ENCODE measurements at regions of chr22 and their contacts with region 1.

Region 1: GRCh38 chr22:29635734-29636357 is 32.4 kb downstream of the NF2 start:
- DNase-seq: peak; percentile 23
- ATAC-seq: peak; percentile 78
- H3K4me3 ChIP-seq: no peak overlapping the region
- H3K27ac ChIP-seq: no peak overlapping the region
- H3K4me1 ChIP-seq: peaks cover 11% of the 10 kb centered on the region
- H3K27me3 ChIP-seq: no peaks in the 10 kb centered on the region
- CTCF ChIP-seq: peak; percentile 62 to 79 (median 70)
- EP300 ChIP-seq: no peak
- POLR2A ChIP-seq: no peak
- RAD21 ChIP-seq: peak; percentile 72

Region 2: DNA sequence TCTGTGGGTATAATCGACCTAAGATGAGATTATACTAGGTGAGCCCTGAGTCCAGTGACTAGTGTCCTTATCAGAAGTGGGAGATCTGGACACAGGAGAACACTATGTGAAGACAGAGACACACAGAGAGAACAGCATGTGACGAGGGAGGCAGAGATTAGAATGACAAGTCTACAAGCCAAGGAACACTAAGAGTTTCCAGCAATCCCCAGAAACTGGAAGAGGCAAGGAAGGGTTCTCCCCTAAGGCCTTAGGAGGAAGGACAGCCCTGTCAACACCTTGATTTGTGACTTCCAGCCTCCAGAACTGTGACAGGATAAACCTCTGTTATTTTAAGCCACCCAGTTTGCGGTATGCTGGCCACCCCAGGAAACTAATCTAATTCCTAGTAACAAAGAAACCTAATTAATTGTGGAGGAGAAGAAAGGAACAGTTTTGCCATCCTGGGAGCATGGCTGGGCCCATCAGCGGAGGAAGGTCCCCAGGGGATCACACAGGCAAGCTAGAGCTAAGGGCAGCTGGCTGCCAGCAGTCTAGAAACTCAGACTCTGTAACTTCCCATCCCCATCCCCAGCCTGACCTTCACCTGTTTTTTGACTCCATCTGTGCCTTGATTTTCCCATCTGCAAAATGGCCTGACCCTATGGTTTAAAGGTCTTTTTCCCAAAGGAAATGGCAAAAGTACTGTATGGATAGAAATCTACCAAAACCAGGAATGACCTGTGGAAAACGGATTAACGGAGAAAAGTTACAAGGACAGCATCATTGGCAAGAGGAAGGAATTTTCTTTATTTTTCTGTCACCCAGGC is 72.0 kb before region 1 on chr22:
- CTCF ChIA-PET with region 1: no interaction called
- POLR2A ChIA-PET with region 1: no interaction called
- RAD21 ChIA-PET with region 1: no interaction called
- SMC1A ChIA-PET with region 1: no interaction called
- in situ Hi-C with region 1: no loop called
- intact Hi-C with region 1: no loop called
- DNase-seq: no peak
- ATAC-seq: no peak
- H3K4me3 ChIP-seq: no peak overlapping the region
- H3K27ac ChIP-seq: no peak overlapping the region
- H3K4me1 ChIP-seq: no peaks in the 10 kb centered on the region
- H3K27me3 ChIP-seq: no peaks in the 10 kb centered on the region
- CTCF ChIP-seq: no peak
- EP300 ChIP-seq: no peak
- POLR2A ChIP-seq: no peak
- RAD21 ChIP-seq: no peak

Region 3: GRCh38 chr22:29647954-29648737 is 12.3 kb after region 1 on chr22:
- CTCF ChIA-PET with region 1: interaction called, 6 read pairs
- POLR2A ChIA-PET with region 1: no interaction called
- RAD21 ChIA-PET with region 1: no interaction called
- SMC1A ChIA-PET with region 1: interaction called, 10 read pairs
- in situ Hi-C with region 1: no loop called
- intact Hi-C with region 1: no loop called
- DNase-seq: no peak
- ATAC-seq: no peak
- H3K4me3 ChIP-seq: no peak overlapping the region
- H3K27ac ChIP-seq: no peak overlapping the region
- H3K4me1 ChIP-seq: no peaks in the 10 kb centered on the region
- H3K27me3 ChIP-seq: no peaks in the 10 kb centered on the region
- CTCF ChIP-seq: no peak
- EP300 ChIP-seq: no peak
- POLR2A ChIP-seq: no peak
- RAD21 ChIP-seq: no peak

Region 4: DNA sequence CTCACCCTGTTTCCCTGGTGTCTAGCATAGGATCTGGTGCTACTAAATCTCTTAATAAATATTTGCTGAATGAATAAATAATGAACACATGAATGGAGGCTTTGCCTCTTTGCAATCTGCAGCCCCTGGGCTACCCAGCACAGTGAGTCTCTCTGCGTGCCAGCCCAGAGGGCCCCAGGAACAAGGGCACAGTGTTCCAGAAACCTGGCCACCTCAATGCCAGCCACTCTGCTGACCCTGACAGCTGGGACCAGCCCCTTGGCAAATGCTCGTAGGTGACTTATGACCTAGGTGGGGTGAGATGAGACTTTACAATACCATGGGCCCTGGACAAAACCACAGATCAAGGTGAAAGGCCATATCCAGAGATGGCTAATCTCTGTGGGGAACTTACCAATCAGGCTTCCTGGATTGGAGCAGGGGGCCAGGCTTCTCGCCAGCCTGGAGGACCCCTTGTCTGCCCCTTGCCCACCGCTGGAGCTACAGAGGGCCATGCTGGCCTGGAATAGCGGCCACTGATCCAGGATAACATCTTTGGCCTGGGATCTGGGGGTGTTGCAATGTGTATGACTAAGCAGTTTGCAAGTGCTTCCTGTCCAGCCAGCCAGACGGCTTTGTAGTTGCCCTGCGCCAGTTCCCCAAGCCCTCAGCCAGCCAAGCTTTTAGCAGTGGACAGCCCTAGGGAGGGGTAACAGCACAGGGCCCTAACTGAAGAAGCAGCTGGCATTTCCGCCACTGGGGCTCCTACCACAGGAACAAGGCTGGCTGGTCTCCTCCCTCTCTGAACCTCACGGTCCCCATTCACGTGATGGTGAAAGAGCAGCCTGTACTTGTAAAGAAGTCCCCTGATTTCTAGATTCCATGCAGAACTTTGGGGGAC is 163.2 kb after region 1 on chr22:
- CTCF ChIA-PET with region 1: no interaction called
- POLR2A ChIA-PET with region 1: no interaction called
- RAD21 ChIA-PET with region 1: no interaction called
- SMC1A ChIA-PET with region 1: no interaction called
- in situ Hi-C with region 1: no loop called
- intact Hi-C with region 1: no loop called
- DNase-seq: no peak
- ATAC-seq: no peak
- H3K4me3 ChIP-seq: no peak overlapping the region
- H3K27ac ChIP-seq: peak overlapping the region; percentile 51
- H3K4me1 ChIP-seq: peaks cover 27% of the 10 kb centered on the region
- H3K27me3 ChIP-seq: no peaks in the 10 kb centered on the region
- CTCF ChIP-seq: no peak
- EP300 ChIP-seq: no peak
- POLR2A ChIP-seq: no peak
- RAD21 ChIP-seq: no peak

Region 5: GRCh38 chr22:29830585-29830984 is 194.7 kb after region 1 on chr22:
- CTCF ChIA-PET with region 1: no interaction called
- POLR2A ChIA-PET with region 1: no interaction called
- RAD21 ChIA-PET with region 1: no interaction called
- SMC1A ChIA-PET with region 1: no interaction called
- in situ Hi-C with region 1: no loop called
- intact Hi-C with region 1: no loop called
- DNase-seq: no peak
- ATAC-seq: no peak
- H3K4me3 ChIP-seq: no peak overlapping the region
- H3K27ac ChIP-seq: no peak overlapping the region
- H3K4me1 ChIP-seq: no peaks in the 10 kb centered on the region
- H3K27me3 ChIP-seq: no peaks in the 10 kb centered on the region
- CTCF ChIP-seq: no peak
- EP300 ChIP-seq: no peak
- POLR2A ChIP-seq: no peak
- RAD21 ChIP-seq: no peak